ENCODE measurements at regions of chr17 and their contacts with region 1.

Region 1: DNA sequence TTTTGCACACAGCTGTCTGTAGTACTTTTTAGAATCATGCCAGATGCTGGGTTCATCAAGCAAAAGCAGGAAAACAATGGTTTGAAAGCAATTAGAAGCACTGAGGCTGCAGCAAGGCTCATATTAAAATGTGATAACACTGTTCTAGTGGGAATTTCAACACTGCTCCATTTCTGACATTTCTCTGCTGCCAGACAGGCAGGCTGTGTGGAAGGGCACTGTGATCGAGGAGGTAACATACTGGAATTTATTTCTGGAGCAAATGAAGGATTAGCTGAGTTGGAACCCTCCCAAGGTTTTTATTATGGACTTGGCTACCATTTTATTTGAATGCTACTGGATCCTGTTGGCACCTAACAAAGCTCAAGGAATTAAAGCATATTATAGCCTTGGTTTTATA is 66.9 kb downstream of the SKAP1 start:
- DNase-seq: no peak
- ATAC-seq: no peak
- H3K4me3 ChIP-seq: no peak overlapping the region
- H3K27ac ChIP-seq: no peak overlapping the region
- H3K4me1 ChIP-seq: no peaks in the 10 kb centered on the region
- H3K27me3 ChIP-seq: peaks cover 10 to 68% of the 10 kb centered on the region in 2 donors
- CTCF ChIP-seq: no peak

Region 2: DNA sequence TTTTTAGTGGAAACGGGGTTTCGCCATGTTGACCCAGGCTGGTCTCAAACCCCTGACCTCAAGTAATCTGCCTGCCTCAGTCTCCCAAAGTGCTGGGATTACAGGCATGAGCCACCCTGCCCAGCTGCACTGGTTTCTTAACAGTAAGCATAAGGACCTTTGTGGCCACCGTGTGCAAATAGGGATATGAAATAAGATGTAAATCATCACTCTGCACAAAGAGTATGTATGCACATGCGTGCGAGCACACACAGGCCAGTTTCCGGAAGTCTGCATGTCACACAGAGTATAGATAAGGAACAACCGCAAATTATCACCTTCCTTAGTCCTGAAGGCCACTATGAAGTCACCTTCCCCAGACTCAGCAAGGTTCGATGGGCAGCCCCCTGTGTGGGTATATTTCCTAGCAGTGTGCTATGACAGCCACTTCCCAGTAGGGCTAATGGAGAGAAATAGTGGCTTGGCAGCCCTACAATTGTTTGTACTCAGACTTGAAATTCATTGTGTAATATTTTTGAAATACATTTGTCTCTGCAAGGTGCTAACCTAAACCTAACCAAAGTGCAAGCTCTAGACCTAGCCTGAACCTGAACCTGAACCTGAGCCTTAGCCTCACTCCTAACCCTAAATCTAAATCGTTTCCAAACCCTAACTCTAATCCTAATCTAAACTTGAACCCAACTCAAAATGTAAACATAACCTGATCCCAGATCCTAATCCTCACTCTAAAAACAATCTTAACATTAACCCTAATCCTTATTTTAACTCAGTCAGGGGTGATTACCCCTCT is 115.3 kb after region 1 on chr17:
- intact Hi-C with region 1: loop called in 1 of 2 experiments (anchors 10 kb)
- DNase-seq: no peak
- ATAC-seq: no peak
- H3K4me3 ChIP-seq: no peak overlapping the region
- H3K27ac ChIP-seq: no peak overlapping the region
- H3K4me1 ChIP-seq: no peaks in the 10 kb centered on the region
- H3K27me3 ChIP-seq: peaks cover 0 to 23% of the 10 kb centered on the region in 2 donors
- CTCF ChIP-seq: no peak

Region 3: DNA sequence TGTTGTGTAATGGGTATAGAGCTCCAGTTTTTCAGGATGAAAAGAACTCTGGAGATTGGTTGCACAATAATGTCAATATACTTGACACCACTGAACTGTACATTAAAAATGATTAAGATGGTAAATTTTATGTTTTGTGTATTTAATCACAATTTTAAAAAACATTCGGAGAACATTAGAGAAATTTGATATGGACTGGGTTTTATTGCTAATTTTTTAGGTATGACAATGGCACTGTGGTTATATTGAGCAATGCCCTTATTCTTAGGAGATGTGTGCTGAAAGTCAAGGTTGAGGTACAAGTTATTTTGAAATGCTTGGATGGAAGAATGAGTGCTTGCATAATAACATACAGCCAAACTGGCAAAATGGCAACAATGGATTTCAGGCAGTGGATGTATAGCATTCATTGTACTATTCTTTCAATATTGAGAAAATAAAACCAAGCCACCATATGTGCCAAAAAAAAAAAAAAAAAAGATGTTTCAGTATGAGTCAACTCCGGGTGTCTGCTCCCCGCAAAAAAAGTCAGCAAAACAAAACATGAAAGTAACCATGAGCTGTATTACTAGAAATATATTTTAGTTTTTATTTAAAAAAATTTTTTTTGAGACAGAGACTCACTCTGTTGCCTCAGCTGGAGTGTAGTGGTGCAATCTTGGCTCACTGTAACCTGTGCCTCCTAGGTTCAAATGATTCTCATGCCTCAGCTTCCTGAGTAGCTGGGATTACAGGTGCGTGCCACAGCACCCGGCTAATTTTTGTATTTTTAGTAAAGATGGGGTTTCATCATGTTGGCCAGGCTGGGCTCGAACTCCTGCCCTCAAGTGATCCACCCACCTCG is 147.8 kb after region 1 on chr17:
- intact Hi-C with region 1: no loop called
- DNase-seq: no peak
- ATAC-seq: no peak
- H3K4me3 ChIP-seq: no peak overlapping the region
- H3K27ac ChIP-seq: no peak overlapping the region
- H3K4me1 ChIP-seq: peaks cover 0 to 7% of the 10 kb centered on the region in 2 donors
- H3K27me3 ChIP-seq: peaks cover 5 to 44% of the 10 kb centered on the region in 2 donors
- CTCF ChIP-seq: no peak